CD8-positive, alpha-beta T cell (primary cell): ENCODE measurements at regions of chr9 and their contacts with region 1.

Region 1: DNA sequence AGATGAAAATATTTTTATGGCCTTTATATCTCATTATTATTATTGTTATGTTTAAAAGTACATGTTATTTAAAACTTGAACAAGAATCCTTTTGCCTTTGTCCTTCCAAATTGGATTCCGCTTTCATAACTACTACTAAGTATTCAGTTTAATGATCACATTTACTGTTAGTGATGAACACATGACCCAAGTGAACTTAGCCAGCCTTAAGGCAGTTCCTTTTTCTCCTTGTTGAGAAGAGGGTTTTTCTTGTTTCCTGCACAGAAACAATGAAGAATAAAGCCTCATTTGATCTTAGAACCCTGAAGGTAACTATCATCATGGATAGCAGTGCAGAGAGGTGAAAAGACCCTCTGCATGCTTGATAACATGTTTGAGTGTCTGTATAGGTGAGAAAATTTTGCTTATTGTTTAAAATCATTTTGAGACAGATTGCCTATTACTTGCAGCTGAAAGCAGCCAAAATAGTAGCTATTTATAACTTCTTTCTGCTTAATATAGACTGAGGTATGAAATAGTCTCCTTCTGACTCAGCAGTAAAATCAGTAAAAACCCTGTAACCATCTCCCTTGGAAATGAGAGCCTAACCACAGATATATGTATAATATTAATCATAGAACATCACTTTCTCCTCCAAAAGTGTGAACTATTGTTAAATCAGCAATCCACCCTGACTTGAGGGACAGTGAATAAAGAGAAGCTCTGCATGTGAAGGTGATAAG is 266.2 kb downstream of the SPATA31D1 start:
- DNase-seq: no peak
- ATAC-seq: no peak
- H3K4me3 ChIP-seq: no peak overlapping the region
- H3K4me3 Mint-ChIP-seq: no peak overlapping the region
- H3K27ac ChIP-seq: no peak overlapping the region
- H3K27ac Mint-ChIP-seq: no peak overlapping the region
- H3K4me1 ChIP-seq: no peaks in the 10 kb centered on the region
- H3K4me1 Mint-ChIP-seq: no peaks in the 10 kb centered on the region
- H3K27me3 ChIP-seq: no peaks in the 10 kb centered on the region
- H3K27me3 Mint-ChIP-seq: no peaks in the 10 kb centered on the region
- CTCF ChIP-seq: no peak

Region 2: GRCh38 chr9:82091610-82092009 is 163.2 kb before region 1 on chr9:
- CTCF ChIA-PET with region 1: no interaction called
- POLR2A ChIA-PET with region 1: no interaction called
- intact Hi-C with region 1: no loop called
- DNase-seq: no peak
- ATAC-seq: no peak
- H3K4me3 ChIP-seq: no peak overlapping the region
- H3K4me3 Mint-ChIP-seq: no peak overlapping the region
- H3K27ac ChIP-seq: no peak overlapping the region
- H3K27ac Mint-ChIP-seq: no peak overlapping the region
- H3K4me1 ChIP-seq: no peaks in the 10 kb centered on the region
- H3K4me1 Mint-ChIP-seq: no peaks in the 10 kb centered on the region
- H3K27me3 ChIP-seq: no peaks in the 10 kb centered on the region
- H3K27me3 Mint-ChIP-seq: no peaks in the 10 kb centered on the region
- CTCF ChIP-seq: no peak

Region 3: GRCh38 chr9:82313697-82314450 is 59.1 kb after region 1 on chr9:
- CTCF ChIA-PET with region 1: no interaction called
- POLR2A ChIA-PET with region 1: no interaction called
- intact Hi-C with region 1: loop called in 1 of 2 experiments (anchors 10 kb)
- DNase-seq: no peak
- ATAC-seq: no peak
- H3K4me3 ChIP-seq: no peak overlapping the region
- H3K4me3 Mint-ChIP-seq: no peak overlapping the region
- H3K27ac ChIP-seq: no peak overlapping the region
- H3K27ac Mint-ChIP-seq: no peak overlapping the region
- H3K4me1 ChIP-seq: no peaks in the 10 kb centered on the region
- H3K4me1 Mint-ChIP-seq: no peaks in the 10 kb centered on the region
- H3K27me3 ChIP-seq: no peaks in the 10 kb centered on the region
- H3K27me3 Mint-ChIP-seq: no peaks in the 10 kb centered on the region
- CTCF ChIP-seq: no peak